Esophagus squamous epithelium (tissue), 5 donors: ENCODE measurements at regions of chr1 and their contacts with region 1.

Region 1: GRCh38 chr1:203340112-203340804 is 10.7 kb downstream of the FMOD start:
- DNase-seq: no peak
- H3K4me3 ChIP-seq: no peak overlapping the region
- H3K27ac ChIP-seq: peak overlapping the region in 2 of 4 donors; percentile 29 to 44
- H3K4me1 ChIP-seq: peaks cover 0 to 40% (median 12%) of the 10 kb centered on the region in 3 donors
- H3K27me3 ChIP-seq: peaks cover 0 to 3% (median 0%) of the 10 kb centered on the region in 4 donors
- CTCF ChIP-seq: peak; percentile 75 to 95 (median 93)
- POLR2A ChIP-seq: no peak

Region 2: GRCh38 chr1:202982715-202983430 is 357.4 kb before region 1 on chr1:
- intact Hi-C with region 1: no loop called
- DNase-seq: no peak
- H3K4me3 ChIP-seq: no peak overlapping the region
- H3K27ac ChIP-seq: no peak overlapping the region
- H3K4me1 ChIP-seq: no peaks in the 10 kb centered on the region
- H3K27me3 ChIP-seq: peaks cover 0 to 28% (median 0%) of the 10 kb centered on the region in 4 donors
- CTCF ChIP-seq: no peak
- POLR2A ChIP-seq: no peak

Region 3: GRCh38 chr1:203216274-203217138 is 123.8 kb before region 1 on chr1:
- intact Hi-C with region 1: no loop called
- DNase-seq: no peak
- H3K4me3 ChIP-seq: no peak overlapping the region
- H3K27ac ChIP-seq: no peak overlapping the region
- H3K4me1 ChIP-seq: peaks cover 0 to 5% (median 0%) of the 10 kb centered on the region in 3 donors
- H3K27me3 ChIP-seq: peaks cover 0 to 22% (median 0%) of the 10 kb centered on the region in 4 donors
- CTCF ChIP-seq: peak; percentile 66 to 84 (median 70)
- POLR2A ChIP-seq: no peak

Region 4: DNA sequence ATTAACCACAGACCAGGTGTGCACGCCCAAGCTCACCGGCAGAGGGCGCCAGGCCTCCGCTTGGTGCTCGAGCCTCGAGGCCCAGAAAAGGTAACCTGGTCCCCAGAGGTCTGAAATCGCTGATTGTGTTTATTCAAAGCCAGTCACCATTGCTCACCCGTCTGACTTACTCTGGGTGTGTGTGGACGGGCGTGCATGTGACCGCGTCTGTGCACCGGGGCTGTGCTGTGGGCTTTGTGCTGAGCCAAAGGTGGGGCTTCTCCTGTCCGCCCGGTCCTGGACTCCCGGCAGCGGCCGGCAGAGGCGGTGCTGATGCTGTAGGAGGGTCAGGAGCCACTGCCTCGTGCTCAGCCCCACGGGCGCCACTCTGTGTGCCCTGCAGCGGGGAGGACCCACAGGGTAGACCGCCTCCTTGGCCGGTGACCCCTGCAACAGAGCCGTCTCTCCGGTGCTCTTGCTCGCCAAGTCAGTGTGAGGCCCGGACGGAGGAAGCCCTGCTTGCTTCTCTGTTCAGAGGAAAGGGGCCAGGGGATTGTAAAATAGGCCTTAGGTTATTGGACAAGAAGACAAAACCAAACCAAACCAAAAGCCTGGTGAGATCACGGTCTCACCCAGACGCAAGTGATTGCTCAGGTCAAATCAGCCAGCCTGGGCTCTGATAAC is 66.9 kb before region 1 on chr1:
- intact Hi-C with region 1: loop called (anchors 2 kb)
- DNase-seq: peak; percentile 51
- H3K4me3 ChIP-seq: peak overlapping the region; percentile 4 to 54 (median 25)
- H3K27ac ChIP-seq: peak overlapping the region; percentile 83 to 95 (median 92)
- H3K4me1 ChIP-seq: peaks cover 30 to 85% (median 61%) of the 10 kb centered on the region in 3 donors
- H3K27me3 ChIP-seq: no peaks in the 10 kb centered on the region
- CTCF ChIP-seq: peak; percentile 98 to 100 (median 99)
- POLR2A ChIP-seq: peak in 2 of 4 donors; percentile 44 to 61

Region 5: DNA sequence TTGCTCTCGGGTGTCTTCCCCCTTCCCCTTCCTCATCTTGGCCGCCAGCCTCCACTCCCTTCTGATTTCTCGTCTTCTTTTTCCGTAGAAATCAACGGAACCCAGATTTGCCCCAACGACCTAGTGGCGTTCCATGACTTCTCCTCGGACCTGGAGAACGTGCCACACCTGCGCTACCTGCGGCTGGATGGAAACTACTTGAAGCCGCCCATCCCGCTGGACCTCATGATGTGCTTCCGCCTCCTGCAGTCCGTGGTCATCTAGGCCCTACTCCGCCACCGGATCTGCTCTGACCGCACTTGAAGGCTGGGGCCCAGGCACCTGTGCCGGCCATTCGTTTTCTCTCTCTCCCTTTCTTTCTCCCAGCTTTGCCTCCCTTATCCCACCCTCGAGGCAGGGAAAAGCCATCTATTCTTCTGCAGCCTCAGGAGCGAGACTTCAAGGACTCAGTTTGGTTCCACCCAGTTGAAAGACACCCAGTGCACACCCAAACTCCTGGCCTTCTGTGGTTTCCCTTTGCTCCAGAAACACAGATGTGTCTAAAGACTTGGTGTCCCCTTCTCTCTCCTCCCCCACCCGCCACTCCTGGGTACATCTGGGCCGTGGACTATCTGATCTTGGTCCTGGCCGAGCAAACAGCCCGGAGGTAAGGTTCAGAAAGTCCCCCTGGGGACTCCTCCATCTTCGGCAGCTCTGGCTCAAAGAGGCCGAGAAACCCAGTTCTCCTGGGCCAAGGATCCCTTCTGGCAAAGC is 146.5 kb after region 1 on chr1:
- intact Hi-C with region 1: loop called (anchors 5 kb)
- DNase-seq: no peak
- H3K4me3 ChIP-seq: peak overlapping the region in 3 of 4 donors; percentile 44 to 64 (median 45)
- H3K27ac ChIP-seq: peak overlapping the region; percentile 73 to 88 (median 82)
- H3K4me1 ChIP-seq: peaks cover 11 to 54% (median 17%) of the 10 kb centered on the region in 3 donors
- H3K27me3 ChIP-seq: peaks cover 0 to 6% (median 0%) of the 10 kb centered on the region in 4 donors
- CTCF ChIP-seq: no peak
- POLR2A ChIP-seq: no peak

Region 6: GRCh38 chr1:203612932-203613682 is 272.8 kb after region 1 on chr1:
- intact Hi-C with region 1: loop called (anchors 10 kb)
- DNase-seq: no peak
- H3K4me3 ChIP-seq: no peak overlapping the region
- H3K27ac ChIP-seq: no peak overlapping the region
- H3K4me1 ChIP-seq: peaks cover 0 to 6% (median 0%) of the 10 kb centered on the region in 3 donors
- H3K27me3 ChIP-seq: no peaks in the 10 kb centered on the region
- CTCF ChIP-seq: no peak
- POLR2A ChIP-seq: no peak